AG04450 (cell line): ENCODE measurements at regions of chr4 and their contacts with region 1.

Region 1: DNA sequence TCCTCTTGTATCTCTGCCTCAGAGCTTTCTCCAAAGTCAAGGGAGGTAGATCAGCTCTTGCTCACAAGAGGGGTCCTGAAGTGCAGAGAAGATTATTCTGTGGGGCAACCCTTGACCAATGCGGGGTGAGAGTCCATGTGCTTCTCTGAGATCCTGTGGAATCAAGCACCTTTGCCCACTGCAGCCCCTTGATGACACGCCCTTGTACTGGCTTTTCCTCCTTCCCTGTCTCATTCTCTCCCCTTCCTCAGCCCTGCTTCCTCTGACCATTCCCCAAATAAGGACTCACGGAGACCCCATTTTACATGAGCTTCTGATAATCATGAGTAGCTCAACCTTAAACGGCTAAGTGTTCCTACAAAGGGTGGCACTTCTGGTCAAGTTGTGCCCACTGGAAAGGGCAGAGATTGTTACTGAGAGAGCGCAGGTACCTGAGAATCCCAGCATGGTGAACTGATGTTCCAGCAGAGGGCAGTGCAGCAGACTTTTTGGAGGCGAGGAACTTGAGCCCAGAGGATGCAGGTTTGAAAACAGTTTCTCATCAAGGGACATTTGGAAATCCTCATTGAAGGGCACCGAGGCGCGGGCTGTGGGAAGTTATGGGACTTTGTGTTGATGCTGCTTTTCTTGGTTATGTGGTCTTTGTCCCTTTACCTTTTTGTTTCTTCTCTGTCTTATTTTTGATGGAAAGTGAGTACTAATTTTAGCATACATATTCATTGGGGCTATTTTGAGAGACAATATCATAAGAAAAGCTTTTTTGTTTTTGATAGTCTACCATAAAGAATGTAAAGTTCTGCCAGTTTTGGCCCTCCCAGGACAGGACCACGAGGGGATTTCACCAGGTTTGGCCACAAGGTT is 201.3 kb downstream of the RBM46 start:
- DNase-seq: peak; percentile 6
- H3K4me3 ChIP-seq: no peak overlapping the region
- H3K27ac ChIP-seq: no peak overlapping the region
- H3K27me3 ChIP-seq: no peaks in the 10 kb centered on the region
- CTCF ChIP-seq: peak; percentile 73

Region 2: GRCh38 chr4:154807042-154807630 is 175.3 kb before region 1 on chr4:
- CTCF ChIA-PET with region 1: no interaction called
- POLR2A ChIA-PET with region 1: no interaction called
- DNase-seq: no peak
- H3K4me3 ChIP-seq: no peak overlapping the region
- H3K27ac ChIP-seq: no peak overlapping the region
- H3K27me3 ChIP-seq: no peaks in the 10 kb centered on the region
- CTCF ChIP-seq: peak; percentile 73

Region 3: GRCh38 chr4:154927126-154927680 is 55.2 kb before region 1 on chr4:
- CTCF ChIA-PET with region 1: no interaction called
- POLR2A ChIA-PET with region 1: no interaction called
- DNase-seq: no peak
- H3K4me3 ChIP-seq: no peak overlapping the region
- H3K27ac ChIP-seq: no peak overlapping the region
- H3K27me3 ChIP-seq: no peaks in the 10 kb centered on the region
- CTCF ChIP-seq: no peak

Region 4: GRCh38 chr4:154961263-154961662 is 21.2 kb before region 1 on chr4:
- CTCF ChIA-PET with region 1: no interaction called
- POLR2A ChIA-PET with region 1: no interaction called
- DNase-seq: no peak
- H3K4me3 ChIP-seq: no peak overlapping the region
- H3K27ac ChIP-seq: no peak overlapping the region
- H3K27me3 ChIP-seq: no peaks in the 10 kb centered on the region
- CTCF ChIP-seq: no peak

Region 5: DNA sequence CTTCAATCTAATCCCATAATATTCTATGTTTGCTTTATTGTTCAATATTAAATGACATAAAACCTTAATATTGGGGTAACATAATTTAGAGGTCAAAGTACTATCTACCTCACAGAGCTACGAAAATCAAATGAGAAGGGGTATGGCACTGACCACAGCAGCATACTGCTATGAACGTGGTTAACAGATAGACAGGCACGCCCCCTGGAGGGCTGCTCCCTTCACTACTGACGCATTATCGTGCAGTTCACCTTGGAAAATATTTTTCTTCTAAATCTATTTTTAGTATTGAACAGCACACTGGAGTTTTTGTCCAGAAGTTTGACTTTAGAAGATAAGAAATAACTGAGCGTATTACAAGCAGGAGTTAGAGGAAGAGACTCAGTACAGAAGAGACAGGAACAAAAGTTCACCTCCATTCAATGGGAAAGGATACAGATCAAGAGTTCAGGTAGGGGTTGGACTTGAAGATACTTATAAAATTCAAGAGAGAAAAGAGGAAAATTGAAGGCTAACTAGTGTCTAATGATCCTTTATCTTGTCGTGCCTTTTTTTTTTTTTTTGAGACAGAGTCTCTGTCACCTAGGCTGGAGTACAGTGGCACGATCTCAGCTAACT is 371.6 kb after region 1 on chr4:
- CTCF ChIA-PET with region 1: interaction called, 29 read pairs
- POLR2A ChIA-PET with region 1: no interaction called
- DNase-seq: no peak
- H3K4me3 ChIP-seq: no peak overlapping the region
- H3K27ac ChIP-seq: no peak overlapping the region
- H3K27me3 ChIP-seq: no peaks in the 10 kb centered on the region
- CTCF ChIP-seq: peak; percentile 89

Region 6: GRCh38 chr4:155376387-155377268 is 394.2 kb after region 1 on chr4 and contains the start of gene MAP9:
- CTCF ChIA-PET with region 1: interaction called, 40 read pairs
- POLR2A ChIA-PET with region 1: no interaction called
- DNase-seq: peak; percentile 79
- H3K4me3 ChIP-seq: peak within 1 kb of the TSS; percentile 81
- H3K27ac ChIP-seq: no peak within 1 kb of the TSS
- H3K27me3 ChIP-seq: no peaks in the 10 kb centered on the region
- CTCF ChIP-seq: no peak
- polyA plus RNA-seq, gene MAP9: 8.2 and 13.9 TPM in 2 replicates